AG04449 (cell line): ENCODE measurements at regions of chr4 and their contacts with region 1.

Region 1: GRCh38 chr4:137531986-137532868 is at the start of gene PCDH18:
- DNase-seq: peak; percentile 84
- H3K4me3 ChIP-seq: peak within 1 kb of the TSS; percentile 81
- CTCF ChIP-seq: no peak

Region 2: GRCh38 chr4:137124278-137124932 is 407.8 kb before region 1 on chr4:
- CTCF ChIA-PET with region 1: interaction called, 14 read pairs
- POLR2A ChIA-PET with region 1: interaction called, 8 read pairs
- DNase-seq: peak; percentile 59
- H3K4me3 ChIP-seq: peak overlapping the region; percentile 49
- CTCF ChIP-seq: peak; percentile 54

Region 3: GRCh38 chr4:137343221-137343620 is 189.0 kb before region 1 on chr4:
- CTCF ChIA-PET with region 1: no interaction called
- POLR2A ChIA-PET with region 1: no interaction called
- DNase-seq: peak; percentile 14
- H3K4me3 ChIP-seq: no peak overlapping the region
- CTCF ChIP-seq: no peak

Region 4: DNA sequence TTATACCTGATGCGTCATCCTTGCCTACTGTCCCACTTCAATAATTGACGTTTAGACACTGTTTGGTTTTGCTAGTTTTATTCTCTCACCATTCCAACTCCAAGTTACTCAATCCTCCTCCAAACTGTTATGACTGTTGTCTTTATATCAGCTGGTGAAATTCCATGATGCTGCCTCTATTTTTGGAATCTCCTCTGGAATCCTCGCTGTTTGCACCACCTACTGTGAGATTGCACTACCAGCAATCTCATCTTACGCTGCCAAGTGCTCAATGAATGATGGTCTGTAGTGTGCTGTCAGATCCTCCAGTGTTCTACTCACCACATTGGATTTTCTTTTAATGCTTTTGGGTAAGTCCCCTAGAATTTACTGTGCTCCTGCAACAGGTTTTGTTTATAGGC is 13.2 kb after region 1 on chr4:
- CTCF ChIA-PET with region 1: interaction called, 14 read pairs
- POLR2A ChIA-PET with region 1: interaction called, 7 read pairs
- DNase-seq: peak; percentile 91
- H3K4me3 ChIP-seq: no peak overlapping the region
- CTCF ChIP-seq: peak; percentile 15